H1 (cell line): ENCODE measurements at regions of chr6 and their contacts with region 1.

Region 1: GRCh38 chr6:152948150-152948768 is 34.6 kb downstream of the FBXO5 start:
- DNase-seq: no peak
- H3K4me3 ChIP-seq: no peak overlapping the region
- H3K27ac ChIP-seq: no peak overlapping the region
- H3K4me1 ChIP-seq: peaks cover 0 to 4% (median 1%) of the 10 kb centered on the region in 4 experiments; a peak in 3 of 7 replicates
- H3K27me3 ChIP-seq: no peaks in the 10 kb centered on the region
- CTCF ChIP-seq: peak in 2 of 3 experiments; percentile 55 to 62; a peak in 2 of 4 replicates
- EP300 ChIP-seq: no peak
- POLR2A ChIP-seq: no peak
- RAD21 ChIP-seq: peak; percentile 86 to 93

Region 2: GRCh38 chr6:152701081-152701862 is 247.0 kb before region 1 on chr6:
- CTCF ChIA-PET with region 1: interaction called, 11 read pairs
- POLR2A ChIA-PET with region 1: no interaction called
- DNase-seq: no peak
- H3K4me3 ChIP-seq: no peak overlapping the region
- H3K27ac ChIP-seq: no peak overlapping the region
- H3K4me1 ChIP-seq: no peaks in the 10 kb centered on the region
- H3K27me3 ChIP-seq: peaks cover 0 to 1% (median 0%) of the 10 kb centered on the region in 4 experiments; a peak in 1 of 7 replicates
- CTCF ChIP-seq: peak in 2 of 3 experiments; percentile 16 to 44; a peak in 2 of 4 replicates
- EP300 ChIP-seq: no peak
- POLR2A ChIP-seq: no peak
- RAD21 ChIP-seq: peak; percentile 68 to 70

Region 3: DNA sequence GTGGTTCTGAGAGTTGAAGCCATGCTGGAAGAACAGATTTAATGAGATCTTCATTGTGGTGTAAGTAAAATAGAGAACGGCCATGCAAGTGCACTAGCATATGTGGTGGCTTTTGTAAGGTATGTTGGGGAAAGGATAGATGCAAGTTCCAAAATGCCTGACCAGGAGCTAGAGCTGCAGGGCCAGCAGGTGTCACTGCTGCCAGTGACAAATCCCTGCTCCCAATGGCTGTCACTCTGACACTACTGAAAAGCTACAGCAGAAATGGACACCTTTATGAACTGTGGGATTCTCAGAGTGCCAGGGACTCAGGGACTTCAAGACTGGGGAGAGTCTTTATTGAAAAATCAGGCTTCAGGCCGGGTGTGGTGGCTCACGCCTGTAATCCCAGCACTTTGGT is 220.7 kb before region 1 on chr6:
- CTCF ChIA-PET with region 1: interaction called, 34 read pairs
- POLR2A ChIA-PET with region 1: no interaction called
- DNase-seq: no peak
- H3K4me3 ChIP-seq: no peak overlapping the region
- H3K27ac ChIP-seq: no peak overlapping the region
- H3K4me1 ChIP-seq: no peaks in the 10 kb centered on the region
- H3K27me3 ChIP-seq: no peaks in the 10 kb centered on the region
- CTCF ChIP-seq: peak; percentile 40 to 55 (median 55); a peak in 3 of 4 replicates
- EP300 ChIP-seq: no peak
- POLR2A ChIP-seq: no peak
- RAD21 ChIP-seq: peak; percentile 50 to 57

Region 4: GRCh38 chr6:152821525-152821924 is 126.7 kb before region 1 on chr6:
- CTCF ChIA-PET with region 1: interaction called, 13 read pairs
- POLR2A ChIA-PET with region 1: no interaction called
- DNase-seq: no peak
- H3K4me3 ChIP-seq: no peak overlapping the region
- H3K27ac ChIP-seq: no peak overlapping the region
- H3K4me1 ChIP-seq: no peaks in the 10 kb centered on the region; a peak in 1 of 7 replicates
- H3K27me3 ChIP-seq: no peaks in the 10 kb centered on the region
- CTCF ChIP-seq: peak in 2 of 3 experiments; percentile 39 to 51; a peak in 2 of 4 replicates
- EP300 ChIP-seq: no peak
- POLR2A ChIP-seq: no peak
- RAD21 ChIP-seq: peak; percentile 60 to 62

Region 5: GRCh38 chr6:152879681-152880080 is 68.6 kb before region 1 on chr6:
- CTCF ChIA-PET with region 1: interaction called, 12 read pairs
- POLR2A ChIA-PET with region 1: no interaction called
- DNase-seq: no peak
- H3K4me3 ChIP-seq: no peak overlapping the region
- H3K27ac ChIP-seq: no peak overlapping the region
- H3K4me1 ChIP-seq: no peaks in the 10 kb centered on the region
- H3K27me3 ChIP-seq: no peaks in the 10 kb centered on the region
- CTCF ChIP-seq: no peak
- EP300 ChIP-seq: no peak
- POLR2A ChIP-seq: no peak
- RAD21 ChIP-seq: no peak

Region 6: DNA sequence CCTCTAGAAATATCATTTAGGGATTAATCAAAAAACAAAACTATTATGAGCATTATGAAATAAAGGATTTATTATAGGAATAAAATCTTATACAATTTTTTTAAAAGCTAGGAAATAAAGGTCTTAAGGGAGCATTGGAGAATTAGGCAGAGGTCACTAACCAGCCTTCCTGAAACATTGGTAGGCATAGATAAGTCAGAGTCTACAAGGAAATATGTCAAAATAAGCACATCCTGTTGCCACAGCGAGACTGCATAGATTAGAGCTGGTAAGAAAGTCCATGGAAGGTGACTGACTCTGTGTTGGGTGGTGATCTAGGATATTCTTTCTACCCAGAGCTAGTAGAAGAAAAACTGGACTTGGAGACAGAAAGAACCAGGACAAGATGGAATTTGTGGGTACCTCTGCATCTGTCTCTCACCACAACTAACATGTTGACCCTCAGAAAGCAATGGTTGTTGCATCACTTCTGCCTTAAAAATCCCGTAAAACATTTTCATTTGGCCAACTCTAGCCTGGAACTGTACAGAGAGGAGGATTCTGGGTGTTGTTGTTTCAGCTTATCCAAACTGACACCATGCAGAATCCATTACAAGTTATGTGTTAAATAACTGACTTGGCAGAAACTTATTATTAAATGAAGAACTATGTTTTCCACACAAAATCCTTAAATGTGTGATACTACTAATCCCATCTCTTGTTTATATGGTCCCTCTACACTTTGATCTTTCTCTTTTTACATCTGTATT is 42.5 kb before region 1 on chr6:
- CTCF ChIA-PET with region 1: interaction called, 19 read pairs
- POLR2A ChIA-PET with region 1: no interaction called
- DNase-seq: no peak
- H3K4me3 ChIP-seq: no peak overlapping the region
- H3K27ac ChIP-seq: no peak overlapping the region
- H3K4me1 ChIP-seq: no peaks in the 10 kb centered on the region; a peak in 2 of 7 replicates
- H3K27me3 ChIP-seq: peaks cover 4 to 24% (median 15%) of the 10 kb centered on the region in 4 experiments
- CTCF ChIP-seq: no peak
- EP300 ChIP-seq: no peak
- POLR2A ChIP-seq: no peak
- RAD21 ChIP-seq: no peak

Region 7: DNA sequence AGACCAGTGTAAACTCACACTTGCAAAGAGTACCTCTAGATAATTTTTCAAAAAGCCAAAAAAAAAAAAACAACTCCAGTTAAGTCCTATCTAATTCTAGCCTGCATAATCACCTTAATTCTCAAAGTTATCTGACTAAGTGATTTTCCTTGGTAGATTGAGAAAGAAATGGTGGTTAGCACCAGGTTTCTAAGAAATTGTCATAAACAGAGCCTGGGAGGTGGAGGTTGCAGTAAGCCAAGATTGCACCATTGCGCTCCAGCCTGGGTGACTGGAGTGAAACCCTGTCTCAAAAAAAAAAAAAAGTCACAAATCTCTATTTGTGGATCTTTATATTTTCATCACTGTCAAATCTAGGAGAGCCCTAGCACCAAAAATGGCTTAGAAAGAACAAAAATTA is 25.7 kb after region 1 on chr6:
- CTCF ChIA-PET with region 1: interaction called, 10 read pairs
- POLR2A ChIA-PET with region 1: no interaction called
- DNase-seq: no peak
- H3K4me3 ChIP-seq: no peak overlapping the region
- H3K27ac ChIP-seq: no peak overlapping the region
- H3K4me1 ChIP-seq: peaks cover 0 to 6% (median 2%) of the 10 kb centered on the region in 4 experiments; a peak in 4 of 7 replicates
- H3K27me3 ChIP-seq: no peaks in the 10 kb centered on the region
- CTCF ChIP-seq: no peak
- EP300 ChIP-seq: no peak
- POLR2A ChIP-seq: no peak
- RAD21 ChIP-seq: no peak

Region 8: DNA sequence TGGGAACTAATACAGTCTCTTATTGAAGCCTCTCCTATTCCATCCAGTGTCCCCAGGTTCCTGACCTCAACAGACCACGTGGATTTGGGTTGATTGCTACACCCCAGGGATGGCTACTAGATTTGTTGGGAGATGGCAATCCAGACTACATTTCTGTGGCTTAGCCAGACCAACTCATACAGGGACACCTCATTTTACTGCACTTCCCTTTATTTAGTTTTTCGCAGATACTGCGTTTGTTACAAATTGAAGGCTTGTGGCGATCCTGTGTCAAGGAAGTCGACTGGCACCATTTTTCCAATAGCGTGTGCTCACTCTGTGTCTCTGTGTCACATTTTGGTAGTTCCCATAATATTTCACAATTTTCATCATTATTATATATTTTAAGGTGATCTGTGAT is 64.6 kb after region 1 on chr6:
- CTCF ChIA-PET with region 1: no interaction called
- POLR2A ChIA-PET with region 1: no interaction called
- DNase-seq: no peak
- H3K4me3 ChIP-seq: no peak overlapping the region
- H3K27ac ChIP-seq: no peak overlapping the region
- H3K4me1 ChIP-seq: no peaks in the 10 kb centered on the region
- H3K27me3 ChIP-seq: no peaks in the 10 kb centered on the region
- CTCF ChIP-seq: no peak
- EP300 ChIP-seq: no peak
- POLR2A ChIP-seq: no peak
- RAD21 ChIP-seq: no peak